Calu3 (cell line): ENCODE measurements at regions of chr3 and their contacts with region 1.

Region 1: GRCh38 chr3:15268033-15268631 is 62.1 kb downstream of the CAPN7 start:
- DNase-seq: peak; percentile 87
- H3K4me3 Mint-ChIP-seq: no peak overlapping the region
- H3K27ac Mint-ChIP-seq: no peak overlapping the region
- H3K4me1 Mint-ChIP-seq: peaks cover 9% of the 10 kb centered on the region
- H3K27me3 Mint-ChIP-seq: no peaks in the 10 kb centered on the region
- CTCF ChIP-seq: peak; percentile 60

Region 2: GRCh38 chr3:15332405-15333098 is 64.4 kb after region 1 on chr3 and contains the start of gene SH3BP5:
- CTCF ChIA-PET with region 1: interaction called, 16 read pairs
- intact Hi-C with region 1: loop called (anchors 2 kb)
- DNase-seq: peak; percentile 77
- H3K4me3 Mint-ChIP-seq: peak within 1 kb of the TSS; percentile 90
- H3K27ac Mint-ChIP-seq: no peak within 1 kb of the TSS
- H3K4me1 Mint-ChIP-seq: peaks cover 4% of the 10 kb centered on the region
- H3K27me3 Mint-ChIP-seq: no peaks in the 10 kb centered on the region
- CTCF ChIP-seq: peak; percentile 59
- total RNA-seq, gene SH3BP5: 4.0 and 4.2 TPM in 2 replicates

Region 3: DNA sequence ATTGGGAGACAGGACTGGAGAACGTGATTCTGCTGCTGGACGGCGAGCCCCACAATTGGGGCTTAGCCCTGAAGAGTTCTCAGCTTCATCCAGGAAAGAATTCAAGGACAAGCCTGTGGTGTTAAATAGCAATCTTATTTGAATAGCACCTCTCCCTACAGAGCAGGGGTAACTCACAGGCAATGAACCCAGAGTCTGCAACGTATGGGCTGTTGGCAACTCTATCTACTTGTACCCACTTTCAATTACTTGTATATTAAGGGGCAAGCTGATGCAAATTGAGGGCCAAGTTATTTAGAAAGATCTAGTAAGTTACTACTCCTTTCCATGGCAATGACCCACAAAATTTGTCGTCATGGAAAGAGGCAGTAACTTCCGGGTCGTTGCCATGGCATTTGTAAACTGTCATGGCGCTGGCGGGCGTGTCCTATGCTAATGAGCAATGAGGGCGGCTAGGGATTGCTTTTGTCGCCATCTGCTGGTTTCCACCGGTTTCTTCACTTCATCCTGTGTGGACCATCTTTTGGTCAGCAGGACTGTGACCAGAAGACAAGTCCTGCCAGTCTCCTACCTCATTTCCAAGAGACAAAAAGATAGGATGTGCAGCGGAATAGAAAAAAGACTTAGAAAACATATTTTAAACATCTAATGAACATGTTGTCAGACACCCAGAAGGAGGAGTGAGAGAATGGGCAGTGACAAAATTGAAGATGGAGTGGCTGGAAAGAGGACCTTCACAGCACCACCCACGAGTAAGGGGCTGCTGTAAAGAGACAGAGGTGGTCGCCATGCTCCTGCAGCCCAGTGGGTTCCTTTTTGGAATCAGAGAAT is 110.0 kb after region 1 on chr3:
- CTCF ChIA-PET with region 1: interaction called, 16 read pairs
- intact Hi-C with region 1: loop called (anchors 1 kb)
- DNase-seq: peak; percentile 91
- H3K4me3 Mint-ChIP-seq: no peak overlapping the region
- H3K27ac Mint-ChIP-seq: peak overlapping the region; percentile 89
- H3K4me1 Mint-ChIP-seq: peaks cover 7% of the 10 kb centered on the region
- H3K27me3 Mint-ChIP-seq: no peaks in the 10 kb centered on the region
- CTCF ChIP-seq: peak; percentile 69

Region 4: DNA sequence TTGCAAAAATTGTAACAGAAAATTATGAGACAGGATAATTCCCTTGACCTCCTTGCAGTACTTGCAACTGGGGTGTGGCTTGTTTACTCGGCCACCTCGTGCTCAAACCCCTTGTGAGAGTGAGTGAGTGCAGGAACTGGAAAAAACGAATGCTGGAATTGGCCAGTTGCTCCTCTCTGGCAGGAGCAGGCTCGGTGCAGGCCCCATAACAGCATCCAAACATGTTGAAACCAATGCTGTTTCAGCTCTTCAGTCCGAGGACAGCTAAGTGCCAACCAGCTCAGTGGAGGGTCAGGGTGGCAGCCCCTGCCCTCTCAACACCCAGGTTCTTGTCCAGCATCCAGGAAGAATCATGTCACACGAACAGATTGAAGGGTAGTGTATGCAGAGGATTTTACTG is 122.3 kb after region 1 on chr3:
- CTCF ChIA-PET with region 1: no interaction called
- intact Hi-C with region 1: no loop called
- DNase-seq: no peak
- H3K4me3 Mint-ChIP-seq: no peak overlapping the region
- H3K27ac Mint-ChIP-seq: no peak overlapping the region
- H3K4me1 Mint-ChIP-seq: peaks cover 22% of the 10 kb centered on the region
- H3K27me3 Mint-ChIP-seq: no peaks in the 10 kb centered on the region
- CTCF ChIP-seq: no peak

Region 5: GRCh38 chr3:15722877-15723620 is 454.9 kb after region 1 on chr3:
- CTCF ChIA-PET with region 1: no interaction called
- intact Hi-C with region 1: no loop called
- DNase-seq: no peak
- H3K4me3 Mint-ChIP-seq: no peak overlapping the region
- H3K27ac Mint-ChIP-seq: no peak overlapping the region
- H3K4me1 Mint-ChIP-seq: no peaks in the 10 kb centered on the region
- H3K27me3 Mint-ChIP-seq: no peaks in the 10 kb centered on the region
- CTCF ChIP-seq: no peak